AG04450 (cell line): ENCODE measurements at regions of chr9 and their contacts with region 1.

Region 1: GRCh38 chr9:32954642-32955041 is 46.8 kb downstream of the APTX start:
- DNase-seq: no peak
- H3K4me3 ChIP-seq: no peak overlapping the region
- H3K27ac ChIP-seq: no peak overlapping the region
- H3K27me3 ChIP-seq: no peaks in the 10 kb centered on the region
- CTCF ChIP-seq: no peak

Region 2: GRCh38 chr9:32968101-32969011 is 13.7 kb after region 1 on chr9:
- CTCF ChIA-PET with region 1: interaction called, 10 read pairs
- POLR2A ChIA-PET with region 1: no interaction called
- DNase-seq: no peak
- H3K4me3 ChIP-seq: no peak overlapping the region
- H3K27ac ChIP-seq: no peak overlapping the region
- H3K27me3 ChIP-seq: no peaks in the 10 kb centered on the region
- CTCF ChIP-seq: peak; percentile 81

Region 3: DNA sequence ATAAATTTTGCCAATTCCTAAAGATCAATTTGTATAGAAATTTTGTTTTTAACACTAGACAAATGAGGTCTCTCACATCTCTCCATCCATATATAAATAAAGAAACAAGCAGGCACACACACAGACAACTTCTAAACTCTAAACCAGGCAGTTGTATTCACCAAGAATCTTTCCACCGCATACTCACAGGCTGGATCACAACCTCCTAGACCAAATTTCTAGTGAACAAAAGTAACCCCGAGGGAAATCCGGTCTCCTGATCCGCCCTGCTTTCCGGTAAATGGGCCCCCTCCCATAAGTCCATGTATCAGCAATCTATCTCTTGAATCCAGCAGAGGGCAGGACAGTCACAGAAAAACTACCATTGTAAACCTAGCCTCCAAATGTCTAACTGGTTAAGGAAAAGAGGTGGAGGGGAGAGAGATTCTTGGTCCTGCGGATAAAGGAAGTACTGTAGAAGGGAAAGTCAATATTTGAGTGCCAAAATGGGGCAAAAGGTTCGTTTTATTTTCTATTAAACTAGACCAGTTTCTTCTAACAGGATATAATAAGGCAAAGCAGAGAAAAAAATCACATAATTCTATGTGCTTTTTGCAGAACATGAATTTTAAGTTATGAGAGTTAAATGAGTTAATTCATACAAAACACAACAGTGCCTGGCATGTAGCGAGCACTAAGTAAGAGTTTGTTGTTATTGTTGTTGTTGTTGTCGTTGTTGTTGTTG is 126.6 kb after region 1 on chr9:
- CTCF ChIA-PET with region 1: no interaction called
- POLR2A ChIA-PET with region 1: no interaction called
- DNase-seq: peak; percentile 72
- H3K4me3 ChIP-seq: peak overlapping the region; percentile 29; the same call in 1 of the 2 replicates
- H3K27ac ChIP-seq: no peak overlapping the region
- H3K27me3 ChIP-seq: no peaks in the 10 kb centered on the region
- CTCF ChIP-seq: peak; percentile 76